Sciatic nerve (tissue), 2 donors: ENCODE measurements at regions of chr13 and their contacts with region 1.

Region 1: GRCh38 chr13:94073007-94073756 is 406.3 kb downstream of the DCT start:
- DNase-seq: no peak
- ATAC-seq: no peak

Region 2: DNA sequence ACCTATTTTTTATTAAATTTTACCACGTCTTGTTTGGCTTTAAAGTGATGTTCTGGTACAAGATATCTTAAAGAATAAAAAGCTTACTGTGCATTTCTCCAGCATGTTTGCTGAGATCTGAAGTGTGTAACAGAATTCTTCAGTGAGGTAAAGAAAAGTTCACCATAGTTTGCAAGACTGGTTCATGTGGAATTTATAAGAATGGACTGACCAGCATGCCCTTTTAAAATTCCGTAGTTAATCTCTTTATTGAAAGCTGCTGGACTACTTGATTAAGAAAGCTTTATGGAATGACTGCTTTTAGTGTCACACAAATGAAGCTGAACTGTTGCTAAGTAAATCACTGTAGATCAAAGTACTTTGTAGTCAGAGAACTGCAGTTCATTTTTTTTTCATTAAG is 727.4 kb before region 1 on chr13:
- intact Hi-C with region 1: no loop called
- DNase-seq: no peak
- ATAC-seq: no peak

Region 3: DNA sequence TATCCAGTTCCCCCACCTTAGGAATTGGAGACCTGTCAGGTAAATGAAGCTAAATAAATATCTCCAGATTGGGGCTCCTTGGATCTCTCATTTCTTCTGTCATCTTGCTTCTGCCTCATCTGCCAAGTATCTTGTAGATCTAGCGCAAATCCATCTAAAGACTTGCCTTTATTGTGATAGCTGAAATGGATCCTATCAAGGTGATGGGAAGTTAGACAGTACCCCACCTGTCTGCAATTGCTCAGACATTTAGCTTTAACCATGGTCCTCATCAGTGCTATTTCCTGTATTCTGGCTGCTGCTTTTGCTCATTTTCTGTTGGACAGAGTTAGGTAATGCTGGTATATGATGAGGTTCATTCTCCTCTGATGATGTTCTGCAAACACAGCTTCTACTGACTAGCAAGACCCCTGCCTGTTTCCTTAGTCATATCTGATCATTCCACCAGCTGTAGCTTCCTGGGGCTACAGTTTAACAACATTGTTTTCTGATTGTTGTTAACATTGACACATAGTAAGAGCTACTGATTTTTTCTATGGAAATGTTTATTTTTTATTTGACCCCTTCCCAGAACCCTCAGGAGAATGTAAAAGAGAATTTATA is 66.3 kb after region 1 on chr13:
- intact Hi-C with region 1: loop called (anchors 2 kb)
- DNase-seq: no peak
- ATAC-seq: no peak

Region 4: DNA sequence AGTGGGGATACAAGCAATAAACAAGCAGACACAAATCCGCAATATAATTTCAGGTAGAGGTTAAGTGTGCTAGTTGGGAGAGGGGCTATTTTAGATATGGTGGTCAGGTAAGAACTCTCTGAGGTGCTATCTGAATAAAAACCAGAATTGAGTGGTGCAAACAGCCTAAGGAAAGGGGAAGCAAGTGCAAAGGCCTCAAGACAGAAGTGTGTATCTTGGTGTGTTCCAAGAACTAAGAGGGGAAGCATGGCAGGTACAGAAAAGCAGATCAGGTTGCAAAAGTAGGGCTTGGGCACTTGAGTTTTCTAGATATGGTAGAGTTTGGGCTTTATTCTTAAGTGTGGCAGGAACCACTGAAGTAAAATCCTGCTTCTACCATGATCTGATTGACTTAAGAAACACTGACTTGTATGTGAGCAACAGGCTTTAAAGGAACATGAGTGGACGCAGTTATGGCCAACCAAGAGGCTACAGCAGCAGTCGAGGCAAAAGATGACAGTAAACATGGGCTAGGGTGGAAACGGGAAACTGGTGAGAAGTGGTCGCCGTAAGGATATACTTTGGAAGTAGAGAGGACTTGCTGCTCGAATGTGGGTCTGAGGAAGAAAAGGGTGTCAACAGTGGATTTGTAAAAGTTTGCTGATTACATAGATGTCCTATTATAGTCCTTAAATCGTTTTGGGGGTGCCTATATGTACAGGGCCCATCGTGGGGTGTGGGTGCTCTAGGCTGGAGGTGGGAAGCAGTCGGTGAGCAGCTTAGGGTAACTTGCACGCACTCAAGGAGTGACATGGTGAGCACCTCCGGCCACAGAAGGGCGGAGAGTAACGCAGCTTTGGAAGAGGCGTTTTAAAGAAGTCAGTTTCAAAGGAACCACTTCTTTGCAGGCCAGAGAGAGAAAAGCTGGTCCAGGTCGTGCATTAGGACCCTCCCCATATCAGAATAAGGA is 522.1 kb after region 1 on chr13:
- intact Hi-C with region 1: no loop called
- DNase-seq: no peak
- ATAC-seq: peak; percentile 63